Aorta (tissue), 5 donors: ENCODE measurements at regions of chr2 and their contacts with region 1.

Region 1: GRCh38 chr2:215528555-215528954 is 92.7 kb upstream of the FN1 start:
- DNase-seq: no peak
- ATAC-seq: no peak
- H3K4me3 ChIP-seq: no peak overlapping the region
- H3K27ac ChIP-seq: peak overlapping the region; percentile 40 to 97
- H3K4me1 ChIP-seq: peaks cover 0 to 3% of the 10 kb centered on the region in 2 donors
- H3K27me3 ChIP-seq: no peaks in the 10 kb centered on the region

Region 2: GRCh38 chr2:215435809-215436704 is 92.5 kb before region 1 on chr2 and contains the start of gene FN1:
- intact Hi-C with region 1: loop called in 1 of 2 experiments (anchors 5 kb)
- DNase-seq: peak; percentile 97 to 98
- ATAC-seq: peak; percentile 96
- H3K4me3 ChIP-seq: peak within 1 kb of the TSS; percentile 72 to 91
- H3K27ac ChIP-seq: peak within 1 kb of the TSS; percentile 98 to 99
- H3K4me1 ChIP-seq: peaks cover 2 to 4% of the 10 kb centered on the region in 2 donors
- H3K27me3 ChIP-seq: no peaks in the 10 kb centered on the region
- total RNA-seq, gene FN1: 4,393 to 6,899 TPM

Region 3: GRCh38 chr2:215460682-215461382 is 67.7 kb before region 1 on chr2:
- intact Hi-C with region 1: loop called in 1 of 2 experiments (anchors 5 kb)
- DNase-seq: no peak
- ATAC-seq: peak; percentile 72
- H3K4me3 ChIP-seq: no peak overlapping the region
- H3K27ac ChIP-seq: peak overlapping the region in 1 of 2 donors; percentile 57
- H3K4me1 ChIP-seq: peaks cover 0 to 3% of the 10 kb centered on the region in 2 donors
- H3K27me3 ChIP-seq: no peaks in the 10 kb centered on the region

Region 4: DNA sequence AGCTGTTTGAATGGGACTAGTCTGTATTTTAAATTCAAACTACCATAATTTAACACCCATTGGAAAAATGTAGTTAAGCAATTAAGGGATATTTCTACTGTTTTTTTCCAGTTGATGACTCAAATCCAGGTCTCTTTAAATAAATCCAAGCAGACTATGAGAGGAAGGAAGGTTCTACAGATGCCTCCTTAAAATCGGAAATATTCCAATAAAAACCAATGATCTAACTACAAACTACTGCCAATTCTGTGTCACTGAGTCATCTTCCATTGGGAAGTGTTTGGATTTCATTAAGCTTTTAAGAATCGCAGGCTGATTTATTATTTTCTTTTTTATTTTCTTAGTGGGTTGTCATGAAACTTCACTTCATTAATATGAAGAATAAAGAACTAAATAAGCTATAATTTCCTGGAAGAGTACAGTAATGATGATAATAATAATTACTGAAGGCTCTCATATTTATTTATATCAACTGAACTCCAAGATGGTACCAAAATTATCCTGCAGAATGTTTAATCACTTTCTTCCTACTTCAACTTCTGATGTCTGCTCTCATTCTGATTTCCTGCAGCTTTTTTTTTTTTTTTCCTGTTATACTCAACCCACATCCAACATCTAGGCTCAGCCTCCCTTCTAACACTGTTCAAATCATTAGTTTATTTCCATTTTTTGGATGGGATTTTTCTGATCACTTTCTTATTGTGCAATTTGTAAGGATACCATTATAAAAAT is 73.6 kb after region 1 on chr2:
- intact Hi-C with region 1: loop called in 1 of 2 experiments (anchors 5 kb)
- DNase-seq: no peak
- ATAC-seq: peak; percentile 68
- H3K4me3 ChIP-seq: no peak overlapping the region
- H3K27ac ChIP-seq: no peak overlapping the region
- H3K4me1 ChIP-seq: peaks cover 0 to 6% of the 10 kb centered on the region in 2 donors
- H3K27me3 ChIP-seq: no peaks in the 10 kb centered on the region

Region 5: DNA sequence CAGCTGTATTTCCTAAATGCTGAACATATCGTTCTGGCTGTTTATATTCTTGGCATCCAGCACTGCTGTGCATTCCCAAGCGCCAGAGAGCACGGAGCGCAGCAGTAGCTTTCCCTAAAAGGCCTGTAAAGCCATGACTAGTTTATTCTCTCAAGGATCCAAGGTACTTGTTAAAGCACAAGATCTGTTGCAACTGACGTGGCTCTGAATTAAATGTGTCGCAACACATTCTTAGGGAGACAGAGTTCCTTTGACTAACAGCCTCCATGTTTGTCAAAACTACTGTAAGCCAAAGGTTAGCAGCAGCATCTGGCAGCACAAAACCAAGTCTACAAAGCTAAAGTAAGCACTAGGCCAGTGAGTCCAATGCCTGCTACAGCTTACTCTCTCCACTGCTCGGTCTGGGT is 95.9 kb after region 1 on chr2:
- intact Hi-C with region 1: loop called in 1 of 2 experiments (anchors 5 kb)
- DNase-seq: peak in 1 of 2 donors; percentile 47
- ATAC-seq: peak; percentile 83
- H3K4me3 ChIP-seq: no peak overlapping the region
- H3K27ac ChIP-seq: peak overlapping the region; percentile 16 to 91
- H3K4me1 ChIP-seq: peaks cover 4 to 6% of the 10 kb centered on the region in 2 donors
- H3K27me3 ChIP-seq: no peaks in the 10 kb centered on the region